ENCODE measurements at regions of chr15 and their contacts with region 1.

Region 1: GRCh38 chr15:72117486-72118399 is at the start of gene MYO9A:
- DNase-seq: peak; percentile 97 to 99 (median 99)
- ATAC-seq: peak; percentile 79
- H3K4me3 ChIP-seq: peak within 1 kb of the TSS; percentile 74
- H3K4me3 Mint-ChIP-seq: peak within 1 kb of the TSS; percentile 98
- H3K27ac ChIP-seq: peak within 1 kb of the TSS; percentile 91 to 92
- H3K27ac Mint-ChIP-seq: peak within 1 kb of the TSS; percentile 97
- H3K4me1 ChIP-seq: peaks cover 15% of the 10 kb centered on the region
- H3K4me1 Mint-ChIP-seq: peaks cover 60% of the 10 kb centered on the region
- H3K27me3 ChIP-seq: no peaks in the 10 kb centered on the region
- H3K27me3 Mint-ChIP-seq: no peaks in the 10 kb centered on the region
- CTCF ChIP-seq: no peak
- total RNA-seq, gene MYO9A: 23.4 to 29.1 TPM

Region 2: GRCh38 chr15:71951134-71951533 is 166.6 kb before region 1 on chr15:
- CTCF ChIA-PET with region 1: no interaction called
- POLR2A ChIA-PET with region 1: no interaction called
- intact Hi-C with region 1: no loop called
- DNase-seq: no peak
- ATAC-seq: no peak
- H3K4me3 ChIP-seq: no peak overlapping the region
- H3K4me3 Mint-ChIP-seq: no peak overlapping the region
- H3K27ac ChIP-seq: no peak overlapping the region
- H3K27ac Mint-ChIP-seq: no peak overlapping the region
- H3K4me1 ChIP-seq: no peaks in the 10 kb centered on the region
- H3K4me1 Mint-ChIP-seq: no peaks in the 10 kb centered on the region
- H3K27me3 ChIP-seq: no peaks in the 10 kb centered on the region
- H3K27me3 Mint-ChIP-seq: no peaks in the 10 kb centered on the region
- CTCF ChIP-seq: no peak

Region 3: GRCh38 chr15:72365844-72366243 is 248.1 kb after region 1 on chr15:
- CTCF ChIA-PET with region 1: no interaction called
- POLR2A ChIA-PET with region 1: no interaction called
- intact Hi-C with region 1: loop called in 1 of 2 experiments (anchors 5 kb)
- DNase-seq: peak in 4 of 14 experiments; percentile 36 to 58 (median 50)
- ATAC-seq: peak; percentile 84
- H3K4me3 ChIP-seq: no peak overlapping the region
- H3K4me3 Mint-ChIP-seq: no peak overlapping the region
- H3K27ac ChIP-seq: no peak overlapping the region
- H3K27ac Mint-ChIP-seq: peak overlapping the region; percentile 7
- H3K4me1 ChIP-seq: peaks cover 18% of the 10 kb centered on the region
- H3K4me1 Mint-ChIP-seq: peaks cover 48% of the 10 kb centered on the region
- H3K27me3 ChIP-seq: no peaks in the 10 kb centered on the region
- H3K27me3 Mint-ChIP-seq: no peaks in the 10 kb centered on the region
- CTCF ChIP-seq: no peak

Region 4: GRCh38 chr15:72389231-72389630 is 271.5 kb after region 1 on chr15:
- CTCF ChIA-PET with region 1: no interaction called
- POLR2A ChIA-PET with region 1: no interaction called
- intact Hi-C with region 1: no loop called
- DNase-seq: no peak
- ATAC-seq: no peak
- H3K4me3 ChIP-seq: no peak overlapping the region
- H3K4me3 Mint-ChIP-seq: no peak overlapping the region
- H3K27ac ChIP-seq: no peak overlapping the region
- H3K27ac Mint-ChIP-seq: no peak overlapping the region
- H3K4me1 ChIP-seq: no peaks in the 10 kb centered on the region
- H3K4me1 Mint-ChIP-seq: no peaks in the 10 kb centered on the region
- H3K27me3 ChIP-seq: no peaks in the 10 kb centered on the region
- H3K27me3 Mint-ChIP-seq: peaks cover 19% of the 10 kb centered on the region
- CTCF ChIP-seq: no peak

Region 5: DNA sequence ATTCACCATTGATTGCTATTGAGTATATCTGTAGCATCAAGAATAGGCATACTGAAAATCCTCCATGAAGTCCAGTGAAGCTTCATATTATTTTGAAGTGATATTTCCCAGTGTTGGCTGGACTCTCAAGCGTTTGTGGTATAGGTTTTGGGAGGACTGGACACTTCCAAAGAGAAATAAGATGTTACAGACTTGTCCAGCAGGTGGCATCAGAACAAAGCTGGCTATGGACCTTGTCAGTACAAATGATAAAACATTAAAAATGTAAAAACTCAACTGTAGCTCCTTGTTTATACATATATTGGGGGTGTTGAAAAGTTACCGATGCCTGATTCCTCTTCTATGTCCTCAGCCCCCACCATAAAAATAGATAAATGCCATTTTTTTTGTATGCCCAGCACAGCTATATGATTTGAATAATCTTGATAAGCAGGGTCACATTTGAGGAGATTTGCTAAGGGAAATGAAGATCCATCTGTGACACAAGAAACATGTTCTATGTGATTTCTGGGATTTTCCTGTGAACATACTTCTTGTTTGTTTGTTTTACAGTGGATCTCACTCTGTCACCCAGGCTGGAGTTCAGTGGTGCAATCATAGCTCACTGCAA is 482.2 kb after region 1 on chr15:
- CTCF ChIA-PET with region 1: no interaction called
- POLR2A ChIA-PET with region 1: no interaction called
- intact Hi-C with region 1: no loop called
- DNase-seq: peak in 4 of 14 experiments; percentile 35 to 58 (median 48)
- ATAC-seq: no peak
- H3K4me3 ChIP-seq: no peak overlapping the region
- H3K4me3 Mint-ChIP-seq: no peak overlapping the region
- H3K27ac ChIP-seq: no peak overlapping the region
- H3K27ac Mint-ChIP-seq: no peak overlapping the region
- H3K4me1 ChIP-seq: no peaks in the 10 kb centered on the region
- H3K4me1 Mint-ChIP-seq: no peaks in the 10 kb centered on the region
- H3K27me3 ChIP-seq: no peaks in the 10 kb centered on the region
- H3K27me3 Mint-ChIP-seq: no peaks in the 10 kb centered on the region
- CTCF ChIP-seq: peak; percentile 79

Region 6: DNA sequence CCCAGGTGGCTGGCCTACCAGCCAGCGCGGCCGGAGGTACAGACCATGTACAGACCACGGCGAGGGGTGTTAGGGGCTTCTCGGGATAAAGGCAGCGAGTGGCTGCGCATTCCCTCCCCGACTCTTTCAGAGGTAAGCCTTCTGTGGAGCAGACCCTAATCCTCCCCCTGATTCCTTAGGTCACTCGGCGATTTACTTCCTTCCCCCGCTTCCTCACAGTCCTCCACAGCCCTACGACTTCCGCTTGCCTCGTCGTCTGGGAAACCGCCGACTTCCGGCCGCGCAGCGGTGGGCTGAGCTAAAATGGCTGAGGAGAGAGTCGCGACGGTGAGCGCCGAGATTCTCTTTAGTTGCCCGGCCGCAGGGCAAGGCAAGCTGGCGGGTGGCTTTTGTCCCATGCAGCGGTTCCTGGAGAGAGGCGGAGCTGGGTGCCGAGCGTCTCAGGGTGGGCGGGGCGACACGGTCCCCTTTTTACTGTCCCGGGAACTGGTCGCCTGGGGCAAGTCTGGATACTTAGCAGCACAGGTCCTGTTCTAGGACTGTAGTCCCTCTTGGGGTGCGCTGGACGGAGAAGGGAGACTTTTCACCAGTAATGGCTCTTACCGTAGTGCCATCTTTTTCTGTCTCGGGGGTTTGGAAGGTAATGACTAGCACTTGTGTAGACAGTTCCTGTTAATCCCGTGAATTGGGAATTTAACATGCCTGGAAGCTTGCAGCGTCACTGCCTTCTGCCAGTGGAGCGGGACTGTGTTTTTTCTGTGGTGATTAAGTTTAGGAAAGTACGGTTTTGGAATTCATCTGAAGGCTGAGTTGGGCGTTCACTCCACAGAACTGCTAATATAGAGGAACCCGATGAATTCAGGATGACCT is 568.4 kb after region 1 on chr15 and contains the starts of genes BBS4 and HIGD2B:
- CTCF ChIA-PET with region 1: no interaction called
- POLR2A ChIA-PET with region 1: no interaction called
- intact Hi-C with region 1: loop called in 1 of 2 experiments (anchors 5 kb)
- DNase-seq: peak; percentile 71 to 93 (median 82)
- ATAC-seq: peak; percentile 92
- H3K4me3 ChIP-seq: peak within 1 kb of the TSS; percentile 75
- H3K4me3 Mint-ChIP-seq: peak within 1 kb of the TSS; percentile 94
- H3K27ac ChIP-seq: peak within 1 kb of the TSS; percentile 77 to 81
- H3K27ac Mint-ChIP-seq: peak within 1 kb of the TSS; percentile 96
- H3K4me1 ChIP-seq: peaks cover 17% of the 10 kb centered on the region
- H3K4me1 Mint-ChIP-seq: peaks cover 18% of the 10 kb centered on the region
- H3K27me3 ChIP-seq: no peaks in the 10 kb centered on the region
- H3K27me3 Mint-ChIP-seq: no peaks in the 10 kb centered on the region
- CTCF ChIP-seq: no peak
- total RNA-seq, gene BBS4: 8.6 to 12.8 TPM
- total RNA-seq, gene HIGD2B: 0.28 TPM in 1 of 2 experiments, not detected in the other

Region 7: DNA sequence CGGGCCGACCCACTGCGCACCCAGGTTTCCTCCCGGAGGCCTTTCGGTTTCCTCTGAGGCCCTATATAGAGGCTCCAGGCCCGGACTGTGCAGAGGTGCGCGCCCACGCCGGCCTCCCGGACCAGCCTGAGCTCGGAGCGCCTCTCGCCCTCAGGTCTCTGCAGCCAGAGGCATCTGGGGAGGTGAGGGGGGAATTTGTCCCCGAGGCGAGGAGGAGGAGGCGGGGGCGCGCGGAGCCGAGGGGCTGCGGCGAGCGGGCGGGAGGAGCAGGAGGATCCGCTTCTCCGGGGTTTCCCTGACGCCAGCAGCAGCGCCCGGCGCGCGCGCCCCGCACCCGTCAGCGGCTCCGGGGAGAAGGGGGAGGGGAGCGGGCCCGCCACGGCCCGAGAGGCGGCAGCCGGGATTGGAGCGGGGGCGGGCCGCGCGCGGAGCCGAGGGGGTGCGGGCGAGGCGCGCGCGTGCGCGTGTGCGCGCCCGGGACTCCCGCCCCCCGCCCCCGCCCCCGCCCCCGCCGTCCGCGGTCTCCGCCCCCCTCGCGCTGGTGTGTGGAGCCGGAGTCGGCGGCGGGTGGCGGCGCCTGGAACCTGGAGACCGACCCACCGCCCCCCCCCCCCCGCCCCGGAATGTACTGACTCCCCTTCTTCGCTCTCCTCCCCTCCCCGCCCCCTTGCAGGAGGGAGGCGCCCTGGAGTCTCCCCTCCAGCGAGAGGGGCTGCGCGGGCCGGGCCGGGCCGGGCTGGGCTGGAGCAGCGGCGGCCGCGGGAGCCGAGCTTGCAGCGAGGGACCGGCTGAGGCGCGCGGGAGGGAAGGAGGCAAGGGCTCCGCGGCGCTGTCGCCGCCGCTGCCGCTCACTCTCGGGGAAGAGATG is 934.3 kb after region 1 on chr15 and contains the start of gene NEO1:
- CTCF ChIA-PET with region 1: no interaction called
- POLR2A ChIA-PET with region 1: no interaction called
- intact Hi-C with region 1: loop called in 1 of 2 experiments (anchors 5 kb)
- DNase-seq: peak; percentile 71 to 93 (median 80)
- ATAC-seq: peak; percentile 81
- H3K4me3 ChIP-seq: peak within 1 kb of the TSS; percentile 85
- H3K4me3 Mint-ChIP-seq: peak within 1 kb of the TSS; percentile 91
- H3K27ac ChIP-seq: peak within 1 kb of the TSS in 1 of 2 donors; percentile 50
- H3K27ac Mint-ChIP-seq: peak within 1 kb of the TSS; percentile 85
- H3K4me1 ChIP-seq: peaks cover 11% of the 10 kb centered on the region
- H3K4me1 Mint-ChIP-seq: peaks cover 14% of the 10 kb centered on the region
- H3K27me3 ChIP-seq: peaks cover 0 to 7% of the 10 kb centered on the region in 2 experiments
- H3K27me3 Mint-ChIP-seq: peaks cover 11% of the 10 kb centered on the region
- CTCF ChIP-seq: no peak
- total RNA-seq, gene NEO1: 6.0 to 8.0 TPM

Measured in CD4-positive, alpha-beta T cell (primary cell).